CD4-positive, alpha-beta memory T cell (primary cell): ENCODE measurements at regions of chr13 and their contacts with region 1.

Region 1: GRCh38 chr13:113863436-113864272 is at the start of gene GAS6:
- DNase-seq: peak in 3 of 5 donors; percentile 10 to 26 (median 26)
- H3K4me3 ChIP-seq: no peak within 1 kb of the TSS
- H3K4me3 Mint-ChIP-seq: peak within 1 kb of the TSS; percentile 67 to 90 (median 82)
- H3K27ac ChIP-seq: no peak within 1 kb of the TSS
- H3K27ac Mint-ChIP-seq: peak within 1 kb of the TSS in 2 of 7 donors; percentile 52 to 71
- H3K4me1 ChIP-seq: peaks cover 12% of the 10 kb centered on the region
- H3K4me1 Mint-ChIP-seq: peaks cover 4 to 26% (median 10%) of the 10 kb centered on the region in 4 donors
- H3K27me3 ChIP-seq: peaks cover 19% of the 10 kb centered on the region
- H3K27me3 Mint-ChIP-seq: peaks cover 29 to 41% of the 10 kb centered on the region in 2 donors
- total RNA-seq, gene GAS6: 16.5 to 17.2 TPM

Region 2: DNA sequence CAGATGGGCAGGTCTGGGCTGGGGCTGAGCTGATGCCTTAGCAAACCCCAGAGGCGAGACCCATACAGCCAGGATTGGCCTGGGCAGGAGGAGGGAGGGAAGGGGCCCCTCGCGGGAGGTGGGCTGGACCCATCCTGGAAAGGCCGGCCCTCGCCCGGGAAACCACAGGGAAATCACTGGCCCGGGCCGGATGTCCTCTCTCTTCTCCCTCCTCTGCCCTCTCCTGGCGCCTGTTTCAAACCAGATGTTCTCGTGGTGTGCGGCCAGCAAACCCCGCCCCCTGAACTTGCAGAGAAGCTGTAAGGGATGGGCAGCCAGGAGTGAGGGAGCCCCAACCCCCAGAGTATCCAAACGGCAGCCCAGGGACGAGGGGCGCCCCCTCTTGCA is 61.5 kb before region 1 on chr13:
- CTCF ChIA-PET with region 1: no interaction called
- POLR2A ChIA-PET with region 1: no interaction called
- intact Hi-C with region 1: no loop called
- DNase-seq: no peak
- H3K4me3 ChIP-seq: no peak overlapping the region
- H3K4me3 Mint-ChIP-seq: no peak overlapping the region
- H3K27ac ChIP-seq: no peak overlapping the region
- H3K27ac Mint-ChIP-seq: no peak overlapping the region
- H3K4me1 ChIP-seq: no peaks in the 10 kb centered on the region
- H3K4me1 Mint-ChIP-seq: no peaks in the 10 kb centered on the region
- H3K27me3 ChIP-seq: no peaks in the 10 kb centered on the region
- H3K27me3 Mint-ChIP-seq: no peaks in the 10 kb centered on the region

Region 3: DNA sequence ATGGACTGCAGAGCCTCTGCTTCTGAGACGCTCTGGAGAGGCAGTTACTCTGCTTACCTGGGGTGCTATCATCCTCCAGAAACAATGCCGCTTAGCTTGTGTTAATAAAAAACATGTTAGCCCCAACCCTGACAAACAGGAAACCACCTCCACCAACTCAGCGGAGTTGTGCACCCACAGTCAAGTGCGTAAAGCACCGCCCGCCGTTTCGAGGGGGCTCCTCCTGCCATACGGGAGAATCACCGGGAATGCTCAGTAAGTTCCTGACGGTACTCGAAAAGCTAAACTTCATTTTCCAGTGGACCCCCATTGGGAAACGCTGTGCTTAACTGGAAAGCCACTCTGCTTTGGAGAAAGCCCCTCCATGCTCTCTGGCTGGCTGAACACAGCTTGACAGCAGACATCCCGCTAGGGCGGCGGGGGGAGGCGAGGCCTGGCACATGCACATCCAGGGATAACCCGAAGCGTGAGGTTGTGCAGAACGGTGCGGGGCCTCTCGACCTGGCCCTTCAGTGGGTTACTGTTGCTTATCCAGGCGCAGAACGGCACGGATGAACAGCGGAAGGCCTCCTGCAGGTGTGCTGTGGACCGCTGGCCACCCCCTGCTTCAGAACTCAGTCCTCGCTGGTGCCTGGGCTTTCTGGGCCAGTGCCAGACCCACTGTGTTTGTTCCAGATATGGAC is 16.9 kb before region 1 on chr13:
- CTCF ChIA-PET with region 1: no interaction called
- POLR2A ChIA-PET with region 1: no interaction called
- intact Hi-C with region 1: loop called (anchors 2 kb)
- DNase-seq: peak in 4 of 5 donors; percentile 42 to 57 (median 48)
- H3K4me3 ChIP-seq: peak overlapping the region; percentile 5 to 11
- H3K4me3 Mint-ChIP-seq: peak overlapping the region; percentile 67 to 87 (median 79)
- H3K27ac ChIP-seq: no peak overlapping the region
- H3K27ac Mint-ChIP-seq: peak overlapping the region in 6 of 7 donors; percentile 36 to 87 (median 60)
- H3K4me1 ChIP-seq: peaks cover 42% of the 10 kb centered on the region
- H3K4me1 Mint-ChIP-seq: peaks cover 22 to 62% (median 35%) of the 10 kb centered on the region in 4 donors
- H3K27me3 ChIP-seq: no peaks in the 10 kb centered on the region
- H3K27me3 Mint-ChIP-seq: no peaks in the 10 kb centered on the region